Activated CD8-positive, alpha-beta T cell treated with anti-CD3 and anti-CD28 coated beads, Interleukin-2, amount 10 ng/mL, durations not matched to agents 7 days and 5 days (primary cell): ENCODE measurements at regions of chr6 and their contacts with region 1.

Region 1: GRCh38 chr6:157235600-157236039 is 87.7 kb downstream of the TMEM242 start:
- DNase-seq: peak; percentile 58
- ATAC-seq: peak; percentile 85
- H3K4me3 Mint-ChIP-seq: peak overlapping the region; percentile 80
- H3K27ac Mint-ChIP-seq: peak overlapping the region; percentile 5
- H3K4me1 Mint-ChIP-seq: peaks cover 21% of the 10 kb centered on the region
- H3K27me3 Mint-ChIP-seq: peaks cover 56% of the 10 kb centered on the region

Region 2: GRCh38 chr6:156866220-156867015 is 369.2 kb before region 1 on chr6:
- CTCF ChIA-PET with region 1: no interaction called
- POLR2A ChIA-PET with region 1: no interaction called
- DNase-seq: no peak
- ATAC-seq: no peak
- H3K4me3 Mint-ChIP-seq: no peak overlapping the region
- H3K27ac Mint-ChIP-seq: no peak overlapping the region
- H3K4me1 Mint-ChIP-seq: peaks cover 28% of the 10 kb centered on the region
- H3K27me3 Mint-ChIP-seq: no peaks in the 10 kb centered on the region

Region 3: GRCh38 chr6:157223021-157223430 is 12.6 kb before region 1 on chr6:
- CTCF ChIA-PET with region 1: interaction called, 12 read pairs
- POLR2A ChIA-PET with region 1: interaction called, 3 read pairs
- DNase-seq: no peak
- ATAC-seq: no peak
- H3K4me3 Mint-ChIP-seq: no peak overlapping the region
- H3K27ac Mint-ChIP-seq: peak overlapping the region; percentile 82
- H3K4me1 Mint-ChIP-seq: peaks cover 49% of the 10 kb centered on the region
- H3K27me3 Mint-ChIP-seq: peaks cover 3% of the 10 kb centered on the region

Region 4: DNA sequence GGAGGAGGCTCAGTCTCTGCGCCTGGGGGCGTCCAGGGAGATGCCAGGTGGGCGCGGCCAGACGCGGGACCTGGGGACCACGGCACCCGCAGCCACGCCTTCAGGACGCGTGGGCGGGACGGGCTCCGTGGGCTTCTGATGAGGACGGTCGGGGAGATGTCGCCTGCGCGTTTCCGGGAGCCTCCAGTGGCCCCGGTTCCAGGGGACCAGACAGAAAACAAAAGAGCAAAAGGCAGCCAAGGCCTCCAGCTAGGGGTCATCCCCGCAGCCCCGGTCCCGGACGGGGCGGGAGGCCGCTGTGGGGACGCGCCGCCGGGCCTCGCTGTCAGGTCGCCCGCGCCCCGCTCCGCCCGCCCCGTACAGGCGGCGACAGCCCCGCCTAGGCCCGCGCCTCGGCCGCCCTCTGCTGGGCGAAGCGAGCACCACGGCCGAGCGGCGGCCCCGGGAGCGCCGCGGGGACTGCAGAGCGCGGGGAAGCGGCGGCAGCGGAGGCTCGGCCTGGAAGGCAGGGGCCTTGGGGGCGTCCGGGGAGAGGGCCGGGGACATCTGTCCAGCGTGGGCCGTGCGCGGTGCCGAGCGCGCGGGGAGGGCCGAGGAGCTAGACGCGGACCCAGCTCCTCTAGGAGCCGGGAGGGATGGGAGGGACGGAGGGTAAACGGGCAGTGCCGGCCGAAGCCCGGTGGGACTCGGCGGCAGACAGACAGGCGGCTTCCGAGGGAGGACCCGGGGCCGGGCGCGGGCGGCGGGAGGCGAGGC is 39.0 kb after region 1 on chr6:
- CTCF ChIA-PET with region 1: interaction called, 13 read pairs
- POLR2A ChIA-PET with region 1: interaction called, 3 read pairs
- DNase-seq: peak; percentile 81
- ATAC-seq: peak; percentile 92
- H3K4me3 Mint-ChIP-seq: peak overlapping the region; percentile 83
- H3K27ac Mint-ChIP-seq: peak overlapping the region; percentile 91
- H3K4me1 Mint-ChIP-seq: peaks cover 10% of the 10 kb centered on the region
- H3K27me3 Mint-ChIP-seq: peaks cover 26% of the 10 kb centered on the region